Cardiac septum (tissue), 1 donor: ENCODE measurements at regions of chr17 and their contacts with region 1.

Region 1: DNA sequence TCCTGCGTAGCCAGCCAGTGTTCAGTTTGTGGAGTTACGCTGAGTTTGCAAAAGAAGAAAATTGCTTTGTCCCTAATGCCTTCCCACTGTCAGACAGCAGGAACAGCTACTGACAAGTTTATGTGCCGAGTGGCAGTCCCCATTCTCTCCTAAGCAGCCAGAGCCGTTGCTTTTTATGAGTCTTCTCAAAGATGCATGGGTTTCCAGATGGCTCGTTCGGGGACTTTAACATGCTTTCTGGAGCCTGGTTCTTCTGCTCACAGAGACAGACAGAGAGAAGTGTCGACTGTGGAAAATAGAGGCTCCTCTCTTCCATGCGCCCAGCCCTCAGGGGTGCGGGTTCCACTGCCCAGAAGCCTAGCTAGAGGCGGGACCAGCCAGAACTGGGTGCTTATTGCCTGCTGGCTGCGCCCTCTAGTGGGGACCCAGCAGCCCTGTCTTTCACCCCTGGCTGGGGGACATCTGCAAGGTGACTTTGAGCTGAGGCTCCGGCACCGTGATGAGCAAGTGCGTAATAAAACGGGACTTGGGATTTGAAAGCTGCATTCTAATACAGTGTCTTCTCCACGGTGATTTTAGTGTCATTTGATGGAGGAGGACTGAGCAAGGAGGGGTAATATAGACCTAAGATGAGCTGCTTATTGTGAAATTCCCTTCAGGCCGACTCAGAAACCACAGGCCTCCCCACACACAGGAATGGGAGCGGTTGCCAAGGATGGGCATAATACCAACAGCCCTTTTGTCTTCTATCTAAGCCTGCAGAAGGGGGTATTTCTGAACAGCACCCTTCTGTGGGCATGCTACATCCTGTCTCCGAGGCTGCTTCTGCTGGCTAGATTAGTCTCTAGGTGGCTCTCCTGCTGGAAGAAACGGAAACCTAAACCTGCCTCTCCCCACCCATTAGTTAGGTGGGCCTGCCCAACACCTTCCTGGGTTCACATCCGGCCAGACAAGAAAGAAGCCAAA is 73.1 kb downstream of the CCDC182 start:
- DNase-seq: peak; percentile 86

Region 2: DNA sequence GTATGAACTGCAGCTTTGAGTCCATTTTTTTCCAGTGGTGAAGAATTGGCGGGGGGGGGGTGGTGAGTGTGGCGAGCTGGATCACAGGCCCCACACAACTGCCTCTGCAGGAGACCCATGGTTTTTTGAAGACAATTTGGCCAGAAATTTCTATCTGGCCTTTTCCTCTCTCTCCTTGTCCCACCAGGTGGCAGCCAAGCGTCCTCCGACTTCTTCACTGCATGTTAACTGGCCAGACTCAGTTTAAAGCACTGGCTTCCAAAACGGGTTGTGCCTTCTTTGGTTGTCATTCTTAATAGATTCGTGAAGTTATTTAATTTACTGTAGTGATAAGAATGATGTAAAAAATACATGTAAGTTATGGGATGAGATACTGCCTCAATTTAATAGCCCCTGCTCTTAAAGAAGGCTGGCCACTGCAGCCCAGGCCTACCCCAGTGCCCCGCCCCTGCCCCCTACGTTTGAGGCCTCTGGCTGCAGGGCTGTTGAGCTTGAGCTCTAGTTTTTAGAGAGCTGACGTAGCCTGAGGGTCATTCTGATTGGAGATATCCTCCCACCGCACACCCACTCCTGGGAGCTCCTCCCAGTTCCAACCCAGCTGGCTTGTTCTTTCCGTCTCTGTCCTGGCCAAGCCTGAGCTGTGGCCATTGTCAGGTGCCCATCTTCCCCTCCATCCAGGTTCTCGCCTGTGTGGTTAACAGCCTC is 550.5 kb before region 1 on chr17:
- intact Hi-C with region 1: loop called (anchors 10 kb)
- DNase-seq: no peak

Region 3: GRCh38 chr17:57243171-57243948 is 428.6 kb before region 1 on chr17:
- intact Hi-C with region 1: loop called (anchors 1 kb)
- DNase-seq: no peak

Region 4: GRCh38 chr17:57284984-57285646 is 386.8 kb before region 1 on chr17:
- intact Hi-C with region 1: loop called (anchors 5 kb)
- DNase-seq: no peak

Region 5: GRCh38 chr17:57597531-57598453 is 74.2 kb before region 1 on chr17:
- intact Hi-C with region 1: loop called (anchors 2 kb)
- DNase-seq: no peak